ENCODE measurements at regions of chr7 and their contacts with region 1.

Region 1: GRCh38 chr7:22110227-22110839 is 164.6 kb upstream of the CDCA7L start:
- DNase-seq: peak; percentile 65 to 74
- H3K4me3 ChIP-seq: no peak overlapping the region
- H3K27ac ChIP-seq: no peak overlapping the region
- H3K4me1 ChIP-seq: no peaks in the 10 kb centered on the region
- H3K27me3 ChIP-seq: no peaks in the 10 kb centered on the region
- CTCF ChIP-seq: peak; percentile 98

Region 2: DNA sequence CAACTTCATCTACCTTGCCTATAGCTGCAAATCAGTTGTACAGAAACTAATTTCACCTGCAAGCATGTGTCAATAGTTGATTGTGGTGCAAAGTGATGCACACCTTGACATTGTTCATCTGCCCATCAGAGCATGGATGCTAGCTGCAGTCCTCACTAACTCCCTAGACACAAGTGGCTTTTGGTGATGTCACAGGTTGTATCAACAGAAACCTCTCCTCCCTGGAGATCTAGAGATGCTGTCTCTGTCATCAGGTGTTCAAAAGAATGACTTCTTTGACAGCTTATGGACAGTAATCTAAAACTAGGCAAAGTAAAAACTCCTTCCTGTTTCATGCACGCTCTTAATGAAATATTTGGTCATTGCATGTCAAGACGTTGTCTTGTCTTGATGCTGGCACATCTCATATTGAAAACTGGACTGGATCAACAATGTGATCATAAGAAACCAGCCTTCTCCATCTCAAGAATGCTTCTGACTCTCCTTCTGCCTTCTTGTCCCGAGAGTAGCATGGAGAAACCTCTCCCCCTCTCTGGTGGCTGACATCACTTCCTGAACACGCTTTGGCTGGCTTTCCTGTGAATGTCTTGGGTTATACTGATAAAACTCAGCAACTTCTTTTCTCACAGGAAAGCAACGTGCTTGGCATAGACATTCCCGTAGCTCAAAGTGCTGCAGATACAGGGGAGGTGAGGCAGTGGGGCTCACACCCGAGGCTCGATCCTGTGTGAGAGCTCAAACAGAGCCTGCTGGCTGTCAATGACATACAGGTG is 11.6 kb after region 1 on chr7:
- CTCF ChIA-PET with region 1: no interaction called
- POLR2A ChIA-PET with region 1: no interaction called
- intact Hi-C with region 1: no loop called
- DNase-seq: no peak
- H3K4me3 ChIP-seq: no peak overlapping the region
- H3K27ac ChIP-seq: no peak overlapping the region
- H3K4me1 ChIP-seq: no peaks in the 10 kb centered on the region
- H3K27me3 ChIP-seq: no peaks in the 10 kb centered on the region
- CTCF ChIP-seq: no peak

Region 3: DNA sequence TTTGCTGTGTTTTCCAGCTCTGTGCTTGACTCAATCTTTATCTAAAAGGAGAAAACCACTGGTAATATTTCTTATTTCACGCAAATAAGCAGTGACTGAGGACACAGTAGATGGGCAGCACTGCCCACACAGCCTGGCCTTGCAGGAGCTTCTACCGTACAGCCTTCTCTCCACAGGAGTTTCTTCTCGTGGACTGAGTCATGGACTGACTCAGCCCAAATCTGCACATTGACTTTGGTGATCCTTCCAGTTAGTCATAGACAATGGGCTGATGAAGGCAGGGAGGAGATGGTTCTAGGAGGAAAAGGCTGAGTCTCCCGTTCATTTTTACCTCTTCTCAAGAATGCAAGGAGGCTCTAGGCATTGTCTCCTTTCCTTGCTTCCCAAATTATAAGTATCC is 45.9 kb after region 1 on chr7:
- CTCF ChIA-PET with region 1: no interaction called
- POLR2A ChIA-PET with region 1: no interaction called
- intact Hi-C with region 1: no loop called
- DNase-seq: peak in 1 of 2 experiments; percentile 58
- H3K4me3 ChIP-seq: no peak overlapping the region
- H3K27ac ChIP-seq: no peak overlapping the region
- H3K4me1 ChIP-seq: no peaks in the 10 kb centered on the region
- H3K27me3 ChIP-seq: no peaks in the 10 kb centered on the region
- CTCF ChIP-seq: no peak

Region 4: DNA sequence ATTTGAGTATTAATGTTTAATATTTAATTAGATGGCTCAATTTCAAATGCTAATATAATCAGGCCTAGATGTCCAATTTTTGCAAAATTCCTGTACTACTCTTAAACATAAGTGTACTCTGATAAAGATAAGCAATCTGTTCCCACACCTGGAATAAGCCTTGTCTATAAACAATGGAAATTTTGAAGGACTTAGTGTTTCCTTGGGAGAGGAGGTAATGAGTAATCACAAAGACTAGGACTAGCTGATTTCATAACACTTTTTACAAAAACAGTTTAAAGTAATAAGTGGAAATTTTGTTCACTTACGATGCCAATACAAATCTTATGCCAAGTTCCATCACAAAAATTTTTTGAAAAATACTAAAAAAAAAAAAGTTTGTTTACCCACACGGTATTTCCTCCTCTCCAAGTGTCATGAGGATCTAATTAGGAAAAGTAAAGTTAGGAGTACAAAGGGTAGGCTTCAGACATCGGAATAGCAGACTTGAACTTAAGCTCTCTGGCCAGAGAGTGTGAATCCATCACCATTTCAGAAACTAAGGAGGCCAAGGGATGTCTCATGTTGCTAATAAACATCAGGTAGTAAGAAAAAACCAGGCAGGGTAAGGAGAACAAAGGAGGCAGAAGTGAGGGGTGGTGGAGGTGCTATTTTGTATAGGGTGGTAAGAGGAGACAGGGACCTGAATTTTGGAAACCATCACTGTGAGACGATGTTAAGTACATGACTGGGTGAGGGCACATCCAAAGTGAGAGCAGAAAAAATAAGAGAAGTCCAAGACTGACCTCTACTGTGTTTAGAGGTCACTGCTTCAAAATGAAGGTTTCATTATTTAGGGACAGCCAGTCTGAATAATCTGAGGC is 185.3 kb after region 1 on chr7:
- CTCF ChIA-PET with region 1: no interaction called
- POLR2A ChIA-PET with region 1: no interaction called
- intact Hi-C with region 1: loop called (anchors 5 kb)
- DNase-seq: no peak
- H3K4me3 ChIP-seq: no peak overlapping the region
- H3K27ac ChIP-seq: no peak overlapping the region
- H3K4me1 ChIP-seq: no peaks in the 10 kb centered on the region
- H3K27me3 ChIP-seq: no peaks in the 10 kb centered on the region
- CTCF ChIP-seq: no peak

Region 5: GRCh38 chr7:22350466-22351328 is 240.4 kb after region 1 on chr7:
- CTCF ChIA-PET with region 1: no interaction called
- POLR2A ChIA-PET with region 1: no interaction called
- intact Hi-C with region 1: no loop called
- DNase-seq: peak; percentile 30 to 89
- H3K4me3 ChIP-seq: no peak overlapping the region
- H3K27ac ChIP-seq: peak overlapping the region; percentile 40
- H3K4me1 ChIP-seq: peaks cover 65% of the 10 kb centered on the region
- H3K27me3 ChIP-seq: no peaks in the 10 kb centered on the region
- CTCF ChIP-seq: no peak

Region 6: DNA sequence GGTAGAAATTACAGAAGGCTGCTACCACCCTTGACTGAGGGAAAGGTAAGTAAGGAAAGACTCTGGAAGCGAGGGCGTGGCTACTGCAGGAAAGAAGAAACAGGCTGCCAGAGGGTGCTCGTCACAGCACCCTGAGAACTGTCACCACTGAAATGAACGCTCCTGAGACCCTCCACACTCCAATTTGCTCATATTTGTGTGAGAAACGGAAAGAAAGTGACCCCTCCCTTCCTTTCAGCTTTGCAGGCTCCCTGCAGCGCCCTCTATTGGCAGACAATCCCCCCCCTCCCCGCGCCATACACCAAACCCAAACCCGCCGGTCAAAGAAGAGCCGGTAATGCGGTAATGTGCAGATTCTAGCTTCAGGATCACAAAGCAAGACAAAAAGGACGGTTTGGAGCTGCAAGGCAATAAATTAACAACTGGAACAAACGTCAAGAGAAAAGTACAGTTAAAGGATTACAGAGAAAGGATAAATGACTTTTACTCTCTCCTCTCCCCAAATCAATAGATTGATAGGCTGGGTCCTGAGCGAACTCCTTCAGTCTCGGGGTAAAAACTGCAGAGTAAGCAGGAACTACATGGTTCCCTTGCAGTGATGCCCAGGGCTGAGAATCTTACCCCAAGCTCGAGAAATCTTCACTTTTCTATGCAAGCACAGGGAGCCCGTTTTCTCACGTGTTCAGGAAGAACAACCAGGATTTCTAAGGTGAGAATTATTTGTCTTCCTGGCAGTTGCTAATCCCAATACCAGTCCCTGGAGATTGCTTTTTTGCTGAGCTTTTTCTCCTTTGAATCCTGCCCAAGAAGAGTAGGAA is 342.0 kb after region 1 on chr7:
- CTCF ChIA-PET with region 1: no interaction called
- POLR2A ChIA-PET with region 1: no interaction called
- intact Hi-C with region 1: loop called (anchors 1 kb)
- DNase-seq: peak in 1 of 2 experiments; percentile 56
- H3K4me3 ChIP-seq: no peak overlapping the region
- H3K27ac ChIP-seq: no peak overlapping the region
- H3K4me1 ChIP-seq: no peaks in the 10 kb centered on the region
- H3K27me3 ChIP-seq: no peaks in the 10 kb centered on the region
- CTCF ChIP-seq: peak; percentile 63

Region 7: DNA sequence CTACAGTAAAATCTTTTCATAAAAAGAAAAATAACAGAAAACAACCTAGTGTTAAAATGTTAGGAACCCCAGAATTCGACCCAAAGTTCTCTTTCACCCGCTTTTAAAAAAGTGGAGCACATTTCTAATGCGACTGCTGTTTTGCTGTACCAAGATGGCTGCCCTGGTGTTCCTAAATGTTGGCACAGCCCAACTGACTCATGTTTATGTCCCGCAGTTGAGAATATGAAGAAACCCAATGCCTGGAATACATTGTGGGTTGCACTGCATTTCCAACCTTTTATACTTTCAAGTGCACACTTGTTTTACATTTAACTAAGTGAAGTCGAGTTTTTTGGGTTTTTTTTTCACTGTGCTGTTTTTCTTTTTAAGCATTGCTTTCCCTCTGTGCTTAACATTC is 388.7 kb after region 1 on chr7:
- CTCF ChIA-PET with region 1: no interaction called
- POLR2A ChIA-PET with region 1: no interaction called
- intact Hi-C with region 1: loop called (anchors 1 kb)
- DNase-seq: no peak
- H3K4me3 ChIP-seq: no peak overlapping the region
- H3K27ac ChIP-seq: no peak overlapping the region
- H3K4me1 ChIP-seq: peaks cover 23% of the 10 kb centered on the region
- H3K27me3 ChIP-seq: no peaks in the 10 kb centered on the region
- CTCF ChIP-seq: no peak

Measured in PC-9 (cell line).